Activated T-helper 1 cell treated with anti-CD3 and anti-CD28 coated beads, Interleukin-12 subunit alpha, Interleukin-12 subunit beta, Interleukin-2, Interleukin-4 antibody, amounts not matched to agents 30 ng/mL and 10 ng/mL and 1 ng/mL, durations not matched to agents 14 hours and 24 hours and 36 hours (primary cell): ENCODE measurements at regions of chr2 and their contacts with region 1.

Region 1: GRCh38 chr2:190880378-190881073 is at the start of gene GLS:
- DNase-seq: peak; percentile 95
- H3K4me3 Mint-ChIP-seq: peak within 1 kb of the TSS; percentile 91
- H3K27ac Mint-ChIP-seq: peak within 1 kb of the TSS; percentile 97
- H3K4me1 Mint-ChIP-seq: peaks cover 40% of the 10 kb centered on the region
- H3K27me3 Mint-ChIP-seq: no peaks in the 10 kb centered on the region
- total RNA-seq, gene GLS: 220 and 237 TPM in 2 replicates

Region 2: DNA sequence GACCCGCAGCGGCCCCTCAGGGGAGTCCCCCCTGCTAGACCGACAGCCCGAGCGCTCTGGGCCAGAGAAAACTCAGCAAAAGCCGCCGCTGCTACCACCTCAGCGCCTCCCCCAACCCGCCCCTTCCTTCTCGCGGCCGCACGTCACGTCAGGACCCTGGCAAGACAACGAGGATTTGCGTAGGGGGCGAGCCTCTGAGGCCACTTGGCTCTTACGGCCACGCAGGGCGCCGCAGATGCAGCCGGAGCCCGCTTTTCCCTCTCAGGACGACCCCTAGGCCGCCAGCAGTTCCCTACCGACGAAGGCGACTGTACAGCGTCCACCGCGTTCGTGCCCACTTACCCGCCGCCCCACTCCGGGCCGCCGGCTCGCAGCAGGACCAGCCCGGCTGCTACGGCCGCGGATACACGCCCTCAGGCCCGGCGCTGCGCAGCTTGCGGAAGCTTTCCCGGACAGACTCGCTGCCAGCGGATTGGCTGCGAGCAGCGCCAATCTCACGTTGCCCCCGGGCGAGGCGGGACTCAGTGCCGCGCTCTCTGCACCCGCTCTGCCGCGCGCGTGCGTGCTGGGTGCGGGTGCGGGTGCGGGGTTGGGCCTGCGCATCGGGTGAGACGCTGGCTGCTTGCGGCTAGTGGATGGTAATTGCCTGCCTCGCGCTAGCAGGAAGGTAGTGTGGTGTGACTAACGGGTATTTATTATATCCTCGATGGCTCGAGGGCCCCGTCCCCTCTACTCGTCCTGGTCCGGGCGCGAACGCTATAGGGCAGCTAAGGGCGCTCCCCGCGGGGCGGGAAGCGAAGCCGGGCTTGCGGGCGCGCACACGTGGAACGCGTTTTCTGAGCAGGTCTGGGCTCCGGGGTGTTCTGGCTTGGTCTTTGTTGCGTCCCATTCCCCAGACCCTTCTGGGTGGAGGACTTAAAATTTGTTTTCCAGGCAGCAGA is 1096.3 kb before region 1 on chr2 and contains the starts of genes ORMDL1 and PMS1:
- intact Hi-C with region 1: loop called (anchors 5 kb)
- DNase-seq: peak; percentile 94
- H3K4me3 Mint-ChIP-seq: peak within 1 kb of the TSS; percentile 92
- H3K27ac Mint-ChIP-seq: peak within 1 kb of the TSS; percentile 93
- H3K4me1 Mint-ChIP-seq: peaks cover 40% of the 10 kb centered on the region
- H3K27me3 Mint-ChIP-seq: no peaks in the 10 kb centered on the region
- total RNA-seq, gene ORMDL1: 78.7 and 80.1 TPM in 2 replicates
- total RNA-seq, gene PMS1: 54.4 and 55.9 TPM in 2 replicates

Region 3: GRCh38 chr2:190648289-190649034 is 232.1 kb before region 1 on chr2:
- intact Hi-C with region 1: loop called (anchors 1 kb)
- DNase-seq: peak; percentile 84
- H3K4me3 Mint-ChIP-seq: peak overlapping the region; percentile 78
- H3K27ac Mint-ChIP-seq: peak overlapping the region; percentile 82
- H3K4me1 Mint-ChIP-seq: peaks cover 48% of the 10 kb centered on the region
- H3K27me3 Mint-ChIP-seq: no peaks in the 10 kb centered on the region

Region 4: GRCh38 chr2:190843874-190844699 is 36.4 kb before region 1 on chr2:
- intact Hi-C with region 1: loop called (anchors 1 kb)
- DNase-seq: peak; percentile 17
- H3K4me3 Mint-ChIP-seq: peak overlapping the region; percentile 44
- H3K27ac Mint-ChIP-seq: peak overlapping the region; percentile 96
- H3K4me1 Mint-ChIP-seq: peaks cover 15% of the 10 kb centered on the region
- H3K27me3 Mint-ChIP-seq: no peaks in the 10 kb centered on the region

Region 5: GRCh38 chr2:191013932-191014652 is 133.6 kb after region 1 on chr2 and contains the start of gene STAT1:
- intact Hi-C with region 1: loop called (anchors 1 kb)
- DNase-seq: peak; percentile 97
- H3K4me3 Mint-ChIP-seq: no peak within 1 kb of the TSS
- H3K27ac Mint-ChIP-seq: no peak within 1 kb of the TSS
- H3K4me1 Mint-ChIP-seq: peaks cover 49% of the 10 kb centered on the region
- H3K27me3 Mint-ChIP-seq: no peaks in the 10 kb centered on the region
- total RNA-seq, gene STAT1: 129 and 136 TPM in 2 replicates

Region 6: GRCh38 chr2:191677646-191678436 is 797.3 kb after region 1 on chr2 and contains the start of gene NABP1:
- intact Hi-C with region 1: loop called (anchors 1 kb)
- DNase-seq: peak; percentile 98
- H3K4me3 Mint-ChIP-seq: peak within 1 kb of the TSS; percentile 94
- H3K27ac Mint-ChIP-seq: peak within 1 kb of the TSS; percentile 98
- H3K4me1 Mint-ChIP-seq: peaks cover 63% of the 10 kb centered on the region
- H3K27me3 Mint-ChIP-seq: no peaks in the 10 kb centered on the region
- total RNA-seq, gene NABP1: 51.0 and 58.4 TPM in 2 replicates